ENCODE measurements at regions of chr16 and their contacts with region 1.

Region 1: DNA sequence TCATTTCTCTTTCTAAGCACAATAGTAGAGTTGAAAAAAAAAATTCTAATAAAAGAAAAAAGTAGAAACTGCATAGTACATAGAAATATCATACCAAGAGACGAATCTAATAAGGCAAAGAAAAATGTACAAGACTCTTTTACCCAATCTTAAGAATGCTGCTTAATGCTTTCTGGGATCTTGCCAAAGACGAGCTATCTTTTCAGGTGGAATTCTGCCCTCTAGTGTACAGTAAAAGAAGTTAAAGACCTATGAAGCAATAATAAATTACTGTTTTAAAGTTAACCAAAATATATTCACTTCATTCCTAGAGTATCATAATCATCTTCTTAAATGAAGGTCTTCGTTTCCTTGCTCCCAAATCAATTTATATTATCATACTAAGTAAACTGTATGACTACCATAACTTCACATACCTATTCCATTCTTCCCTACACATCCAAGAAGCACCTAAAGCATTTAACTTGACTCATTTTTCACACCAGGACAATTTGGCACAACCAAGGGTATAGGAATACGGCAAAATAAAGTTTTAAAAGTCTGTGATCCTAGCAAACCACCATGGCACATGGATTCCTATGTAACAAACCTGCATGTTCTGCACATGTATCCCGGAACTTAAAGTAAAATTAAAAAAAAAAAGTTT is 47.7 kb downstream of the CFDP1 start:
- DNase-seq: peak; percentile 88
- H3K4me3 ChIP-seq: no peak overlapping the region
- H3K27ac ChIP-seq: peak overlapping the region; percentile 28
- H3K4me1 ChIP-seq: peaks cover 36% of the 10 kb centered on the region
- H3K27me3 ChIP-seq: no peaks in the 10 kb centered on the region
- CTCF ChIP-seq: peak; percentile 19 to 30
- POLR2A ChIP-seq: no peak

Region 2: GRCh38 chr16:75244844-75245758 is 140.5 kb before region 1 on chr16:
- CTCF ChIA-PET with region 1: interaction called, 24 read pairs
- POLR2A ChIA-PET with region 1: interaction called, 5 read pairs
- dilution Hi-C with region 1: no loop called
- intact Hi-C with region 1: loop called (anchors 1 kb)
- DNase-seq: peak; percentile 94
- H3K4me3 ChIP-seq: peak overlapping the region in 1 of 3 experiments; percentile 5
- H3K27ac ChIP-seq: peak overlapping the region; percentile 92
- H3K4me1 ChIP-seq: peaks cover 66% of the 10 kb centered on the region
- H3K27me3 ChIP-seq: no peaks in the 10 kb centered on the region
- CTCF ChIP-seq: no peak
- POLR2A ChIP-seq: peak; percentile 74

Region 3: GRCh38 chr16:75265845-75266701 is 119.6 kb before region 1 on chr16:
- CTCF ChIA-PET with region 1: interaction called, 10 read pairs
- POLR2A ChIA-PET with region 1: interaction called, 3 read pairs
- dilution Hi-C with region 1: no loop called
- intact Hi-C with region 1: no loop called
- DNase-seq: peak; percentile 71
- H3K4me3 ChIP-seq: peak overlapping the region; percentile 82 to 89 (median 88)
- H3K27ac ChIP-seq: peak overlapping the region; percentile 93
- H3K4me1 ChIP-seq: peaks cover 46% of the 10 kb centered on the region
- H3K27me3 ChIP-seq: no peaks in the 10 kb centered on the region
- CTCF ChIP-seq: no peak
- POLR2A ChIP-seq: peak; percentile 69

Region 4: DNA sequence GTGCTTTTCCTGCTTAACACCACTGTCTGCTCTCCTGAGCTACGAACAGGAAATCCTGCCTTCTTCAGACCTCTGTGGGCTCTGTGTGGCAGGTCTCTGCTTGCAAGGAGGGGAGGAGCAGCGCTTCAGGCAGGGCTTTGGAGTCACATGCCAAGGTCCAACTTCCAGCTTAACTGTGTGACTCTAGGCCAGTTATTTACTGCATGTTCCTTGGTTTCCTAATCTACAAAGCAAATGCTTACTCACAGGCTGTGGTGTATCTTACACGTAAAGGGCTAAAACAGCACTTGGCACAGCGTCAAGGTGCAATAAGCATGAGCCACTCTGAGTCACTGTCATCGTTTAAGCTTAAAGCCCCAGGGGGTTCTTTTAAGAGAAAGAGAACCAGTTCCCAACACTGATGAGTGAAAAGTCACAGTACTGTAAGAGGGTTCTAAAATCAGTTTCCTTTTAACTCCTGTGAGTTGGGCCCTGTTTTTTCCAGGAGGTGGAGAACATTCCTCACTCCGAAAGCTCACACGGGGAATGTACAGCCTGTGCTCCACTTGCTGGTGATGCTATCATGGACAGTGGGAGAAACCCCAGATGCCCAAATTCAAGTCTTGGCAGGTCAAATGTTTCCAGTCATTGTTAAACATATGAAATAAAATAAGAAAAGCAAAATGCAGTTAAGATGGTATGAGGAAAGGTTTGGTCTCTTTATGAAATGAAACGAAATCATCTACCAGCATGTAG is 80.1 kb before region 1 on chr16:
- CTCF ChIA-PET with region 1: interaction called, 22 read pairs
- POLR2A ChIA-PET with region 1: no interaction called
- dilution Hi-C with region 1: no loop called
- intact Hi-C with region 1: loop called (anchors 1 kb)
- DNase-seq: peak; percentile 98
- H3K4me3 ChIP-seq: peak overlapping the region in 1 of 3 experiments; percentile 13
- H3K27ac ChIP-seq: peak overlapping the region; percentile 91
- H3K4me1 ChIP-seq: peaks cover 38% of the 10 kb centered on the region
- H3K27me3 ChIP-seq: no peaks in the 10 kb centered on the region
- CTCF ChIP-seq: no peak
- POLR2A ChIP-seq: no peak

Region 5: DNA sequence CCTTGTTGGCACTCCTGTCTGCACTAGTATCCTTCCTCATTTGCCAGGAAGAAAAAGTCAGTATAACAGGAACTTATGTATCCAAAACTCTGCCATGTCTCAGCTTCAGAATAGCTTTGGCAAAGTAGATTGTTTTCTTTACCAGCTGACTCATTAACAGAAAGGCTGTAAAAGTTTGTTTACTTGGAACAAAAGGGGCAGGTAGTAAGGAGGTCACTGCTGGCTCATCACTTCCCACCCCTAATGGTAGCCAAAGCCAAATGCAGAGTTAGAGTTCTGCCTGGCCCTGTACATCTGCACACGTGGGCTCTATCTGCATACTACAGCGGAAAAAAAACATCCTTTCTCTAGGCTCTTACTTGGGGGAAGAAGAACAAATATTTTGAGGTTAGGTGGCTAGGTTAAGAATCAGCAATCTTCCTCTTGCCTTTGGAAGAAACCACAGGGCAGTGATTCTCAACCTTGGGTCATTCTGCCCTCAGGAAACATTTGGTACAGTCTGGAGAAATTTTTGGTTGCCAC is 43.3 kb before region 1 on chr16:
- CTCF ChIA-PET with region 1: interaction called, 31 read pairs
- POLR2A ChIA-PET with region 1: interaction called, 3 read pairs
- dilution Hi-C with region 1: no loop called
- intact Hi-C with region 1: loop called (anchors 1 kb)
- DNase-seq: peak; percentile 99
- H3K4me3 ChIP-seq: no peak overlapping the region
- H3K27ac ChIP-seq: peak overlapping the region; percentile 100
- H3K4me1 ChIP-seq: peaks cover 58% of the 10 kb centered on the region
- H3K27me3 ChIP-seq: no peaks in the 10 kb centered on the region
- CTCF ChIP-seq: no peak
- POLR2A ChIP-seq: peak; percentile 55

Measured in endothelial cell of umbilical vein (primary cell).